Activated naive CD4-positive, alpha-beta T cell treated with anti-CD3 and anti-CD28 coated beads for 36 hours (primary cell): ENCODE measurements at regions of chr3 and their contacts with region 1.

Region 1: DNA sequence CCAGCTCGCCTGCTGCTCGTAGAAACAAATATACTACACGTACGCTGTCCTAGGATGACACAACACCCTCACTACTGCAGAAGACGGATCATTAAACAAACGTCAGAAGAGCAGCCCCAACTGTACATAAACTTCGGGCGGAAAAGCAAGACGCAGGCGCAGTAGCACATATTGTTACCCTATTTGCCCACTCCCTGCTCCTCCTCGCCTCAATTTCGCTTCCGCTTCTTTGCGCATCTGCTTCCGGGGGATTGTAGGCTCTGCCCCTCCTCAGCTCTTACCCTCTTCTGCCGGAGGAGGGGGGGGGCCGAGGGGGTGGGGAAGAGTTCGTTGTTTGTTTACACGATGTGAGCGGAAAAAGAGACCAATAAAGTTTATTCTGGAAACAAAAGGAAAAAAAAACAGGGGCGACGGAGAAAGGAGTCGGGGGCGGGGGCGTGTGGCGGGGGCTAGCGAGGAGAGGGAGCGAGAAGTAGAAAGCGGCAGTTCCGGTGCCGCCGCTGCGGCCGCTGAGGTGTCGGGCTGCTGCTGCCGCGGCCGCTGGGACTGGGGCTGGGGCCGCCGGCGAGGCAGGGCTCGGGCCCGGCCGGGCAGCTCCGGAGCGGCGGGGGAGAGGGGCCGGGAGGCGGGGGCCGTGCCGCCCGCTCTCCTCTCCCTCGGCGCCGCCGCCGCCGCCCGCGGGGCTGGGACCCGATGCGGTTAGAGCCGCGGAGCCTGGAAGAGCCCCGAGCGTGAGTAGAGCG is at the start of gene PIK3CA:
- DNase-seq: peak; percentile 95
- H3K4me3 Mint-ChIP-seq: peak within 1 kb of the TSS; percentile 94
- H3K27ac Mint-ChIP-seq: peak within 1 kb of the TSS; percentile 96
- H3K4me1 Mint-ChIP-seq: peaks cover 36% of the 10 kb centered on the region
- H3K27me3 Mint-ChIP-seq: no peaks in the 10 kb centered on the region
- total RNA-seq, gene PIK3CA: 15.8 to 15.9 TPM

Region 2: GRCh38 chr3:178880274-178880673 is 267.8 kb before region 1 on chr3:
- CTCF ChIA-PET with region 1: no interaction called
- intact Hi-C with region 1: no loop called
- DNase-seq: no peak
- H3K4me3 Mint-ChIP-seq: no peak overlapping the region
- H3K27ac Mint-ChIP-seq: no peak overlapping the region
- H3K4me1 Mint-ChIP-seq: no peaks in the 10 kb centered on the region
- H3K27me3 Mint-ChIP-seq: peaks cover 3% of the 10 kb centered on the region

Region 3: GRCh38 chr3:179000144-179000543 is 147.9 kb before region 1 on chr3:
- CTCF ChIA-PET with region 1: no interaction called
- intact Hi-C with region 1: loop called (anchors 1 kb)
- DNase-seq: peak; percentile 12
- H3K4me3 Mint-ChIP-seq: no peak overlapping the region
- H3K27ac Mint-ChIP-seq: no peak overlapping the region
- H3K4me1 Mint-ChIP-seq: peaks cover 11% of the 10 kb centered on the region
- H3K27me3 Mint-ChIP-seq: no peaks in the 10 kb centered on the region

Region 4: DNA sequence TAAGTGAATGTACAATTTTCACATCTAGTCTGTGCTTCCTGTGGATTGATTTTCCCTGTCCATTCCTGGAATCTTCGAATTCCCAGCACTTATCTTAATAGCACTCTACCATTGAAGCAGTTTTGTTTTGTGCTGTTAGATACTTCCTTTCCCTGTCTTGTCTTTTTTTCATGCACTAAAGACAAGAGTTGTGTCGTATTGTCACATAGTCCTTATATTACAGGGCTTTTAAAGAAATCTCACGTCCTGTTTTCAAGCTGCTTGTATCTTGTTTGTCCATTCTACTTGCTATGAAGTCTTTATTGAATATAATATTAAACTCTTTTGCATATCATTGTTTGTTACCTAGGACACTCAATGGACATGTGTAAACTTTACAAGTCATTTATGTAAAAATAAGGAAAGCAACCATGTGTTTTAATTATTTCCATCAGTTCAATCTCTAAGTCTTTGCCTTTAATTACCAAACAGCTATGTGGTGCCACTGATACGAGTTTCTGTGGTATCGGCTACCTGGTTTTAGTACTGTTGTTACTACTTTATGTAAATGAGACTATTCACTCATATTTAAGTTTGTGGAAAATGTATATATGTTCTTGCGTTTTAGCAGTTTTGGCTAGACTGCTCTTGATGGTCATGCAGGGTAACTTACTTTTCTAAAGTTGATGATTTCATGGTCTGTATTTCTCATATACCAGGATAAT is 10.4 kb after region 1 on chr3:
- CTCF ChIA-PET with region 1: interaction called, 7 read pairs
- intact Hi-C with region 1: loop called (anchors 1 kb)
- DNase-seq: no peak
- H3K4me3 Mint-ChIP-seq: no peak overlapping the region
- H3K27ac Mint-ChIP-seq: no peak overlapping the region
- H3K4me1 Mint-ChIP-seq: peaks cover 54% of the 10 kb centered on the region
- H3K27me3 Mint-ChIP-seq: no peaks in the 10 kb centered on the region

Region 5: DNA sequence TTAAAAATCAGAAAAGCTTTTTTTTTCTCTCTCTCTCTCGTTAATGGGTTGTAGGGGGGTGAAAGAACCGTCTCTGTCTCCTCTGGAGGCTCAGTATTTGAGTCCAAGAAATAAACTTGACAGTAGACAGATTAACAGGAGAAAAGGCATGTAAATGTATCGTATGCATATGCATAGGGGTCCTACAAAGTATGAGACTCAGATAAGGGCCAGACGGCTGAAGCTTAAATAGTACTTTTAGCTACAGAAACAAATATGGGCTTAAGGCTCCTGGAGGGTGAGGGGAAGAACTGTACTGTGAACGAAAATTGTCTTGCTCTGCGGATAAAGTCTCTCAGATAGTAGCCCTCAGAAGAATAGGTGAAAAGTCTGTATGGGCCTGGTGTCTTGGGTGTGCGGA is 42.6 kb after region 1 on chr3:
- CTCF ChIA-PET with region 1: no interaction called
- intact Hi-C with region 1: no loop called
- DNase-seq: no peak
- H3K4me3 Mint-ChIP-seq: no peak overlapping the region
- H3K27ac Mint-ChIP-seq: no peak overlapping the region
- H3K4me1 Mint-ChIP-seq: peaks cover 48% of the 10 kb centered on the region
- H3K27me3 Mint-ChIP-seq: no peaks in the 10 kb centered on the region

Region 6: DNA sequence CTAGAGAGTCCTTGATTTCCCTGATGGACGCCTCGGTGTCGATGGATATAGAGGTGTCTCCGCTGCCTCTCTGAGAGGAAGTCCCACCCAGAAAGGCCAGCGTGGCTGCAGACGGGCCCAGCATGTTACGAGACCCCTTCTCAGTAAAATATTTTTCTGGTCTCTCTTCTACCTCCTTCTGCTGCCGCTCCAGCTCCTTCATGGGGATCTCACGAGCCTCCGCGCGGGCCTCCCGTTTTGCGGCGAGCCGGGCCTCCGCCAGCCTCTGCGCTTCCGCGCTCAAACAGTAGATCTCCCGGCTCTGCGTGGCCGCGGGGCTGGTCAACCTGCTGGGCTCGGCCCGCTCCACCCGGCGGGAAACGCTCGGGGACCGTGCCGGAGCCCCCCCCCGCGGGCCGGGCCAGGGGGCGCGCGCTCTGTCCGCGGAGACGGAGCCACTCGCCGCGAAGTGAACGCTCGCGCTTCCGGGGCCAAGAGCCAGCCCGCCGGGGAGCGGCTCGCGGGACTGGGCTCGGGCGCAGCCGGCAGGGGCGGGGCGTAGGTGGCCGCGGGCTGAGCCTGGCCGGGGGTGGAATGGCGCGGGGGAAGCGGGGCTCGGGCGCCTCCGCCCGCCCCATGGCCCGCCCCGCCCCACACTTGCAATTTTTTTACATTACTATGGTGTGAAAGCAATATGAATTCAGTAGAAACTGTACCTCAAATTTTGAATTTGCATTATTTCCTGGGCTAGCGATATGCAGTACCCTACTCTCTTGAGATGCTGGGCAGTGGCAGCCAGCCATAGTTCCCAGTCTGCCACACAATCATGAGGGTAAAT is 113.1 kb after region 1 on chr3:
- CTCF ChIA-PET with region 1: interaction called, 4 read pairs
- intact Hi-C with region 1: loop called (anchors 1 kb)
- DNase-seq: peak; percentile 69
- H3K4me3 Mint-ChIP-seq: peak overlapping the region; percentile 63
- H3K27ac Mint-ChIP-seq: no peak overlapping the region
- H3K4me1 Mint-ChIP-seq: peaks cover 12% of the 10 kb centered on the region
- H3K27me3 Mint-ChIP-seq: peaks cover 2% of the 10 kb centered on the region

Region 7: GRCh38 chr3:179347345-179348194 is 199.5 kb after region 1 on chr3 and contains the start of gene MFN1:
- CTCF ChIA-PET with region 1: no interaction called
- intact Hi-C with region 1: loop called (anchors 1 kb)
- DNase-seq: peak; percentile 94
- H3K4me3 Mint-ChIP-seq: peak within 1 kb of the TSS; percentile 91
- H3K27ac Mint-ChIP-seq: peak within 1 kb of the TSS; percentile 91
- H3K4me1 Mint-ChIP-seq: peaks cover 13% of the 10 kb centered on the region
- H3K27me3 Mint-ChIP-seq: no peaks in the 10 kb centered on the region
- total RNA-seq, gene MFN1: 23.0 to 23.1 TPM

Region 8: GRCh38 chr3:180601688-180602666 is 1453.9 kb after region 1 on chr3 and contains the start of gene TTC14:
- CTCF ChIA-PET with region 1: no interaction called
- intact Hi-C with region 1: loop called (anchors 5 kb)
- DNase-seq: peak; percentile 96
- H3K4me3 Mint-ChIP-seq: peak within 1 kb of the TSS; percentile 94
- H3K27ac Mint-ChIP-seq: peak within 1 kb of the TSS; percentile 91
- H3K4me1 Mint-ChIP-seq: peaks cover 15% of the 10 kb centered on the region
- H3K27me3 Mint-ChIP-seq: peaks cover 11% of the 10 kb centered on the region
- total RNA-seq, gene TTC14: 51.7 to 52.4 TPM